ENCODE measurements at regions of chr19 and their contacts with region 1.

Region 1: GRCh38 chr19:20349206-20349605 is 182.2 kb downstream of the ZNF486 start:
- DNase-seq: no peak
- H3K4me3 ChIP-seq: no peak overlapping the region
- H3K27ac ChIP-seq: no peak overlapping the region
- H3K4me1 ChIP-seq: no peaks in the 10 kb centered on the region
- H3K27me3 ChIP-seq: no peaks in the 10 kb centered on the region
- CTCF ChIP-seq: no peak

Region 2: GRCh38 chr19:20388826-20389225 is 39.6 kb after region 1 on chr19:
- CTCF ChIA-PET with region 1: no interaction called
- POLR2A ChIA-PET with region 1: no interaction called
- intact Hi-C with region 1: no loop called
- DNase-seq: no peak
- H3K4me3 ChIP-seq: no peak overlapping the region
- H3K27ac ChIP-seq: no peak overlapping the region
- H3K4me1 ChIP-seq: no peaks in the 10 kb centered on the region
- H3K27me3 ChIP-seq: no peaks in the 10 kb centered on the region
- CTCF ChIP-seq: no peak

Region 3: GRCh38 chr19:20726755-20727154 is 377.5 kb after region 1 on chr19:
- CTCF ChIA-PET with region 1: no interaction called
- POLR2A ChIA-PET with region 1: no interaction called
- intact Hi-C with region 1: loop called (anchors 10 kb)
- DNase-seq: no peak
- H3K4me3 ChIP-seq: no peak overlapping the region
- H3K27ac ChIP-seq: no peak overlapping the region
- H3K4me1 ChIP-seq: no peaks in the 10 kb centered on the region
- H3K27me3 ChIP-seq: no peaks in the 10 kb centered on the region
- CTCF ChIP-seq: no peak

Measured in PC-9 (cell line).